Activated CD4-positive, alpha-beta T cell treated with anti-CD3 and anti-CD28 coated beads, Interleukin-2, amount 10 ng/mL, durations not matched to agents 7 days and 5 days (primary cell): ENCODE measurements at regions of chr16 and their contacts with region 1.

Region 1: DNA sequence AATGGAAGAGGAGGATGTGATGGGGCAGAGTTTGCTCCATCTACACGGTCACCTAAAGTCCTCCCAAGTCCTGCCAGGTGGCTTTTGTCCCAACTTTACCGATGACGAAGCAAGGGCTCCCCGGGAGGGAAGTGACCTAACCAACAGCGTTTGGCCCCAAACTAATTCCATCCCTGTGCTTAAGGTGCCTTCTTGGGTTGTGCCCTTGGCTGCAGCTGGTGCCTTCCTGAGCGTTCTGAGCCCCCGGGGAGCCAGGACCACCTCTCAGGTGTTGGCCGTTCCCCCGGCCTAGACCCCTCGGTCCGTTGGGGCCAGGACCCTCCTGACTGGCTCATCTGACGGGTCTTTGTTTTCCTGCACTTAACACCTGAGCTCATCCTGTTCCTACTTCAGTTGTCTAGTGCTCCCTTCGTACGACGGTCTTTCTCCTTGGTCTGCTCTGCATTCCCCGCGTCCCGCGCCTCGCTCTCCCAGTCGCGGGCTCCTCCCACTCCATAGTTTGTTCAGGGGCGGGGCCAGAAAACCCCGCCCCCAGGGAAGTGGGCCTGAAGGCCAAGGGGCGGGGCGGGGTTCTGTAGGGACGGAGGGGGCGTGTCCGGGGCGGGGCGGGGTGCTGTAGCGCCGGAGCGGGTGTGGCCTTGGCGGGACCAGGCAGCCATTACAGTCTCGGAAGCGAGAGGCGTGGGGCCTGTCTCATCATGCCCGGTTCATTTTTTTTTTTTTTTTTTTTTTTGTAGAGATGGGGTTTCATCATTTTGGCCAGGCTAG is 822 bp upstream of the ZSCAN10 start:
- DNase-seq: peak; percentile 94
- H3K4me3 Mint-ChIP-seq: peak overlapping the region; percentile 84
- H3K27ac Mint-ChIP-seq: peak overlapping the region; percentile 91
- H3K4me1 Mint-ChIP-seq: peaks cover 71% of the 10 kb centered on the region
- H3K27me3 Mint-ChIP-seq: no peaks in the 10 kb centered on the region

Region 2: DNA sequence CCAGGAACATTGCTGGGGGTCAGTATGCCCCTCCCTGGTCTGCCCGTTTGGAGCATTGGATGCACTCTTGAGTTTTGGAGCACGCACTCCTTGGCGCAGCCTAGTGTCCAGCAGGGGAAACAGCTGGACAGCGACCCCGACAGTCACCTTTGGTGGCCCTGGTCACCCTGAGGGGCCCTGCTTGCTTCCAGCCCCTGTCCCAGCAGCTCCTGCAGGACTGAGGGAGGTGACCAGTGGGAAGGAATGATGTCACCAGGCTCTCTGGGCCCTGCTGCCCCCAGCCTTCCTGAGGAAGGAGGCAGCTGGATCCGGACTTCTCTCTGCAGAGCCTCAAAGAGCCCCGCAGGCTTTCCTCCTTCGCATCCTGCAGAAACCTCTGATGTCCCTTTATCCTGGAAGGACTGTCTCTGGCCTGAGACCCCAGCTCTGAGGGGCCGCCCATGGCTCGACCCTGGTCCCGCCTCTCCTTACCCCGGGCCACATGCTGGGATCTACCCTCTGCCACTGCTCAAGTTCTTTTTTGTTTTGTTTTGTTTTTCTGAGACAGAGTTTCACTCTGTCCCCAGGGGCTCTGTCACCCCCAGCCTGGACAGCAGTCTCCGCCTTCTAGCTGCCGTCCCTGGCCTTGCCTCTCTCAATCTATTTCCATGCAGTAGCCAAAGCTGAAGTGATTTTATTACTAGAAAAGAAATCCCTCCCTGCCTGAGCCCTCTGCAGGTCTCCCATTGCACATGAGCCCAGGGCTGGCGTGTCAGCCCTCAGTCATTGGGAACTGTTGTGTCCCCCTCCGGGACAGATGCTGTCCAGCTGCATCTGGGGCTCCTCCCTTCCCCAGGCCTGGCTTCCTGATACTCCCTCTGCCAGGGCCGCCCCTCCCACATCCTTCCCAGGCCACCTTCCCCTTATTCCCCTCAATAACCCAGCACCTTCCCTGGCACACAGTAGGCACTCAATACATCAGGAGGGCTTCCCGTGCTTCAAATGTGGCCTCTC is 12.4 kb before region 1 on chr16:
- CTCF ChIA-PET with region 1: interaction called, 38 read pairs
- POLR2A ChIA-PET with region 1: no interaction called
- DNase-seq: no peak
- H3K4me3 Mint-ChIP-seq: peak overlapping the region; percentile 69
- H3K27ac Mint-ChIP-seq: peak overlapping the region; percentile 89
- H3K4me1 Mint-ChIP-seq: peaks cover 64% of the 10 kb centered on the region
- H3K27me3 Mint-ChIP-seq: no peaks in the 10 kb centered on the region

Region 3: DNA sequence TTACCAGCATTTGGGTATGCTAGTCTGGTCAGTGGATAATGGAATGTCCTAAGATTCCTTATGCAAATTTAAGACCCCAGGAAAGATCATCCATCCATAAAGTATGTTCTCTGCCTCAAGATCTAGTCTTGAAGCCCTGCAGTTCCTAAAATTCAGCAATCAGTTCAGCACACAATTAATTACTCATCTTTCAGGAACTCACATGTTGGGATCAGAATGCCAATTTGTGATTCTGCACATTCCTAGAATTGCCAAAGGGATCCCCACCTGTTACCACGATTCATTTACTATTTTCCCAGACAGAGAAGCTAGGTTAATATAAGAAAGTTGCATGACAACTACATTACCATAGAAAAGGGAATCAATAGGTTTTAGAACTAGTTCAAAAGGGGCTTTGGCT is 259.0 kb after region 1 on chr16:
- CTCF ChIA-PET with region 1: no interaction called
- POLR2A ChIA-PET with region 1: no interaction called
- DNase-seq: no peak
- H3K4me3 Mint-ChIP-seq: no peak overlapping the region
- H3K27ac Mint-ChIP-seq: no peak overlapping the region
- H3K4me1 Mint-ChIP-seq: peaks cover 3% of the 10 kb centered on the region
- H3K27me3 Mint-ChIP-seq: peaks cover 15% of the 10 kb centered on the region